CD4-positive, alpha-beta T cell (primary cell): ENCODE measurements at regions of chr13 and their contacts with region 1.

Region 1: DNA sequence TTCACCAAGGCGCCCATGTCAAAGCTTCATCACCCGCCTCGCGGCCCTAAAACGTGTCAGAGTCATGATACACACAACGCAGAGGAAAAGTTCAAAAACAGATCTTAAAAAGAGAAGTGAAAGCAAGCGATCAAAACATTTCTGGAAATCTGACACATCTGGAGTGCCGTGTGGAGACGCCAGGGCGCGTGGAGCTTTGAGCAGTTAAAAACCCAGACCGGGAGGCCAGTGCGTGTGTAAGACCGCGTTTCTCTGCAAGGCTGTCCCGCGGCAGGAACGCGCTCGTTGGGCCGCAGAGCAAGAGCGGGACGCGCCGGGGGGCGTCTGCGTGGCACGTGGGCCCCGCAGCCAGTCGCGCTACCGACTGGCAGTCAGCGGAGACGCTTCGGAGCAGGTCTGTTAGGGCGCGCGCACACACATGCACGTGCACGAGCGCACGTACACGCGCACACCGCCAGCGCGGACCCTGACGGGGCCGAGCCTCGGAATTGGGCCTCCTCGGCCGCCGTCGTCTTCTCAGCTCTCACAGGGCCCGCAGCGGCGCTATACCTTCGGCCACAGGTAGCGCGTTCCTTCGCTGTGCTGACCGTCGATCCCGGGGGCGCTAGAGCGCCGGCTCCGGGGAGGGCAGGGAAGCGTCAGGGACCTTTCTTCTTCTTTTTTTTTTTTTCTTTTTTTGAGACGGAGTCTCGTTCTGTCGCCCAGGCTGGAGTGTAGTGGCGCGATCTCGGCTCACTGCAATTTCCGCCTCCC is 35.8 kb downstream of the RNF6 start:
- DNase-seq: peak; percentile 83 to 97 (median 88)
- ATAC-seq: peak; percentile 83
- H3K4me3 ChIP-seq: peak overlapping the region; percentile 88
- H3K4me3 Mint-ChIP-seq: peak overlapping the region; percentile 87
- H3K27ac ChIP-seq: peak overlapping the region; percentile 55 to 60
- H3K27ac Mint-ChIP-seq: peak overlapping the region; percentile 92
- H3K4me1 ChIP-seq: peaks cover 26% of the 10 kb centered on the region
- H3K4me1 Mint-ChIP-seq: peaks cover 23% of the 10 kb centered on the region
- H3K27me3 ChIP-seq: no peaks in the 10 kb centered on the region
- H3K27me3 Mint-ChIP-seq: no peaks in the 10 kb centered on the region
- CTCF ChIP-seq: peak; percentile 40

Region 2: DNA sequence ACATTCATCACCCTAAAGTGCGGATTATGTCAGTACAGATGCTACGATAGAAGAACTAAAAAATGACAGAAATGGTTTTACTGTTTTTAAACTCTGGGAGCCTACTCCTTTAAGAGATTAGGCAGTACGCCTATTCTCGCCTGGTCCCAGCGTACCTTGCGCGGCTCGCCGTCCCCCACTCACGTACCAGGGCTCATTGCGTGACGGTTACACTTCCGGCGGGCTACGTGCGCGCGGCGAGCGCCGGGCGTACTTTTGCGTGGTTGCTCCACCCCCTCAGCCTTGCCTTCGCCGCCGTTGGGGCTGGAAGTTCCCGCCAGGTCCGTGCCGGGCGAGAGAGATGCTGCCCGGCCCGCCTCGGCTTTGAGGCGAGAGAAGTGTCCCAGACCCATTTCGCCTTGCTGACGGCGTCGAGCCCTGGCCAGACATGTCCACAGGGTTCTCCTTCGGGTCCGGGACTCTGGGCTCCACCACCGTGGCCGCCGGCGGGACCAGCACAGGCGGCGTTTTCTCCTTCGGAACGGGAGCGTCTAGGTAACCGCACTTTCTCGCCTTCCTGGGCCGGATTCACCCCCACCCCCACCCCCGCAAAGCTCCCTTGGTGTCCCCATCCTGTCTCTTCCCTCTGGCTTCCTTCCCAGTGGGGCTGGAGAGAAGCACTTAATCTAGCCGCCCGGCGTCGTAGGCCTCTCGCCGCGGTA is 884.8 kb before region 1 on chr13 and contains the start of gene NUP58:
- CTCF ChIA-PET with region 1: no interaction called
- POLR2A ChIA-PET with region 1: no interaction called
- intact Hi-C with region 1: loop called in 1 of 2 experiments (anchors 5 kb)
- DNase-seq: peak; percentile 87 to 98 (median 90)
- ATAC-seq: peak; percentile 97
- H3K4me3 ChIP-seq: peak within 1 kb of the TSS; percentile 80
- H3K4me3 Mint-ChIP-seq: peak within 1 kb of the TSS; percentile 99
- H3K27ac ChIP-seq: peak within 1 kb of the TSS; percentile 92 to 94
- H3K27ac Mint-ChIP-seq: peak within 1 kb of the TSS; percentile 95
- H3K4me1 ChIP-seq: peaks cover 26% of the 10 kb centered on the region
- H3K4me1 Mint-ChIP-seq: peaks cover 49% of the 10 kb centered on the region
- H3K27me3 ChIP-seq: peaks cover 0 to 4% of the 10 kb centered on the region in 2 experiments
- H3K27me3 Mint-ChIP-seq: peaks cover 14% of the 10 kb centered on the region
- CTCF ChIP-seq: no peak
- total RNA-seq, gene NUP58: 56.5 to 60.9 TPM

Region 3: GRCh38 chr13:26132756-26133155 is 53.5 kb before region 1 on chr13:
- CTCF ChIA-PET with region 1: no interaction called
- POLR2A ChIA-PET with region 1: no interaction called
- intact Hi-C with region 1: no loop called
- DNase-seq: peak in 1 of 14 experiments; percentile 2
- ATAC-seq: no peak
- H3K4me3 ChIP-seq: no peak overlapping the region
- H3K4me3 Mint-ChIP-seq: no peak overlapping the region
- H3K27ac ChIP-seq: no peak overlapping the region
- H3K27ac Mint-ChIP-seq: no peak overlapping the region
- H3K4me1 ChIP-seq: no peaks in the 10 kb centered on the region
- H3K4me1 Mint-ChIP-seq: no peaks in the 10 kb centered on the region
- H3K27me3 ChIP-seq: peaks cover 0 to under 1% of the 10 kb centered on the region in 2 experiments
- H3K27me3 Mint-ChIP-seq: peaks cover 6% of the 10 kb centered on the region
- CTCF ChIP-seq: no peak

Region 4: DNA sequence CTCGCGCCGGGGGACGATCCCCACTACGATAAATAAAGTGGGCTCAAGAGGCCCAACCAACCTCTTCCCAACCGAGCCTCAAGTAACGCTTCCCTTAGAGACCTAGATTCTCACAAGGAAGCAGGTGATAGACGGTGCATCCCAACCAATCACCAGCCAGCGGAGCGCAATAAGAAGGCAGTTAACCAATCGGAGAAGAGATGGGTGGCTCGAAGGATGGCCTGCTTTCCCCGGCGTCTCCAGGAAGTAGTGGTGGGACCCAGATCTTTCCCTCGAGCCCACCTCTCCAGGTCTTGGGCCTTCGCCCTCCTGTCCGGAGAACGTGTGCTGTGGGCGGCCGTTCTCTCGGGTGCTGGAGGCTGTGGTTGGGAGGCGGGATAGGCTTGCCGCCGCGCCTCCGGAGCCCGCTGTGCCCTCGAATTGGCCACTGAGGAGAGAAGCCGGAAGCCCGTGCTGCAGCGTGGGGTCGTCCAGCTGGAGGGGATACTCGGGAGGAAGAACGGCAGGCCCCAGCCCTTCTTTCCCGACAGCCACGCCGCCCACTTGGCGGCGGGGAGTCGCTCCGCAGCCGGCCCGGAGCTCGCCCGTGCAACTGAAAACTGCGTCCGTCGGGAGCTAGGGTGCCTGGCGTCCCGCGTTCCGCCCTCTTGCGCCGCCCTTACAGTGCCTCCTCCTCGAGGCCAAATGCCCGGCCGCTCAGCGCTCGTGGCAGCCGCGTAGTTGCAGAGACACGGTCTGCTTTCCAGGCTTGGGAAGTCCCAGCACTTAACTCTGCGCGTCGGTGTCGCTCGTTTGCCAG is 35.6 kb after region 1 on chr13 and contains the start of gene RNF6:
- CTCF ChIA-PET with region 1: interaction called, 51 read pairs
- POLR2A ChIA-PET with region 1: interaction called, 52 read pairs
- intact Hi-C with region 1: loop called (anchors 1 kb)
- DNase-seq: peak; percentile 75 to 96 (median 84)
- ATAC-seq: peak; percentile 94
- H3K4me3 ChIP-seq: peak within 1 kb of the TSS; percentile 84
- H3K4me3 Mint-ChIP-seq: peak within 1 kb of the TSS; percentile 99
- H3K27ac ChIP-seq: peak within 1 kb of the TSS; percentile 96
- H3K27ac Mint-ChIP-seq: peak within 1 kb of the TSS; percentile 89
- H3K4me1 ChIP-seq: peaks cover 17% of the 10 kb centered on the region
- H3K4me1 Mint-ChIP-seq: peaks cover 46% of the 10 kb centered on the region
- H3K27me3 ChIP-seq: no peaks in the 10 kb centered on the region
- H3K27me3 Mint-ChIP-seq: no peaks in the 10 kb centered on the region
- CTCF ChIP-seq: no peak
- total RNA-seq, gene RNF6: 46.5 to 49.5 TPM

Region 5: DNA sequence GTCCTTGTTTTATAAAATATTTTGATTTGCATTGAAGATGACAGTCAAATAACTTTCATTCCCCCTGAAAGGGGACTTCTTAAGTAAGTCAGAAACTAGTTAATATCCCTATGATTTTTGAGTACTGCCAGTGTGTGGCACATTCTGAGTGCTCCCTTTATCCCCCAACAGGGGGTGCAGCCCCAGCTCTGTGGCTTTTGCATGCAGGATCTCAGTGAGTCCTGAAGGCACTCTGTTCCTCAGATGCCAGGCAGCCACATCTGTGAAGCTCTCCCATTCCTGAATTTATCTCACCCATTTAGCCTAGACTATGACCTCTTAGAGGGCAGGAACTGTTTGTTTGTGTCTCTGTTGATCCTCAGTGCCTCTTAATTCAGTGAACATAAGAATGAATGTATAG is 190.7 kb after region 1 on chr13:
- CTCF ChIA-PET with region 1: interaction called, 4 read pairs
- POLR2A ChIA-PET with region 1: interaction called, 4 read pairs
- intact Hi-C with region 1: loop called in 1 of 2 experiments (anchors 10 kb)
- DNase-seq: peak in 3 of 14 experiments; percentile 2 to 8 (median 4)
- ATAC-seq: no peak
- H3K4me3 ChIP-seq: no peak overlapping the region
- H3K4me3 Mint-ChIP-seq: no peak overlapping the region
- H3K27ac ChIP-seq: no peak overlapping the region
- H3K27ac Mint-ChIP-seq: no peak overlapping the region
- H3K4me1 ChIP-seq: no peaks in the 10 kb centered on the region
- H3K4me1 Mint-ChIP-seq: peaks cover 26% of the 10 kb centered on the region
- H3K27me3 ChIP-seq: no peaks in the 10 kb centered on the region
- H3K27me3 Mint-ChIP-seq: no peaks in the 10 kb centered on the region
- CTCF ChIP-seq: peak; percentile 24

Region 6: DNA sequence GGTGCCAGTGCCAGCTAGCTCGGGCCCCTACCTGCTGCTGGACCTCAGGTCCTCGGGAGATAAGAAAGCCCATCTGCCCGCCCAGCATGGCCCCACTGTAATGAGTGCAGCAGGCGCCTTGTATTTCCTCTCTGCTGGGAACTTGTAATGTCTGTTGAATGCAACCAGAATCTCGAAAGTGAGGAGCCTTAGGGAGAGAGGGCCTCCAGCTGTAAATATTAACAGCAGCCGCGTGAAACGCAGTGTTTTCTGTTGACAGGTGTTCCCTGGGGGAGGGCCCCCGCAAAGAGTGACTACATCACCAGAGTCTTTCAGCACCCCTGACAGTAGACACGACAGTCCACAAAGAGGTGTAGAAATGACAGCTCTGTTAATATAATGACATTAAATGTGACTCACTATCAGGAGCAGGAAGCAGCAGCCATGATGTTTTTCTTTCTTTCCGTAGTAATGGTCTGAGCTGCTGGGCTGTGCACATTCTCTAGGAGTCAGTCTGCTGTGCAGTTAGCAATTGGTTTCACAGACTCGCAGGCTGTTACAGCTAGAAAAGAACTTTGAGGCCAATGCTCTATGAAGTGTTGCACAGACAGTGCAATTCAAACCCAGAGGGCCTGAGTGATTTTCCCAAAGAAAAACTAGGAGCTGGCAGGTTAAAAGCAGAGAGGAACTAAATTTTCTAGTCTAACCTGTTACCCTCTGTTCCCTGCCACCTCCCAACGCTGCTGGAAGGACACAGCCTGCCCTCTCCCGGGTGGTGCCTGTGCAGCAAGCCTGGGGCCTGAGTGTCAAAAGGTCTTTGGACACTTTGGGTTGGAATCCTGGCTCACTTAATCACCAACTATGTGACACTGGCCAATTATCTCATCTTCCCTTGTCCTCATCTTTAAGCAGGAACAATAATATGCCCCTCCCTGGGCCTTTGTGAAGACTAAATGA is 312.6 kb after region 1 on chr13:
- CTCF ChIA-PET with region 1: interaction called, 58 read pairs
- POLR2A ChIA-PET with region 1: interaction called, 19 read pairs
- intact Hi-C with region 1: loop called (anchors 1 kb)
- DNase-seq: no peak
- ATAC-seq: no peak
- H3K4me3 ChIP-seq: no peak overlapping the region
- H3K4me3 Mint-ChIP-seq: no peak overlapping the region
- H3K27ac ChIP-seq: no peak overlapping the region
- H3K27ac Mint-ChIP-seq: no peak overlapping the region
- H3K4me1 ChIP-seq: no peaks in the 10 kb centered on the region
- H3K4me1 Mint-ChIP-seq: peaks cover 9% of the 10 kb centered on the region
- H3K27me3 ChIP-seq: peaks cover 0 to 4% of the 10 kb centered on the region in 2 experiments
- H3K27me3 Mint-ChIP-seq: peaks cover 10% of the 10 kb centered on the region
- CTCF ChIP-seq: no peak

Region 7: DNA sequence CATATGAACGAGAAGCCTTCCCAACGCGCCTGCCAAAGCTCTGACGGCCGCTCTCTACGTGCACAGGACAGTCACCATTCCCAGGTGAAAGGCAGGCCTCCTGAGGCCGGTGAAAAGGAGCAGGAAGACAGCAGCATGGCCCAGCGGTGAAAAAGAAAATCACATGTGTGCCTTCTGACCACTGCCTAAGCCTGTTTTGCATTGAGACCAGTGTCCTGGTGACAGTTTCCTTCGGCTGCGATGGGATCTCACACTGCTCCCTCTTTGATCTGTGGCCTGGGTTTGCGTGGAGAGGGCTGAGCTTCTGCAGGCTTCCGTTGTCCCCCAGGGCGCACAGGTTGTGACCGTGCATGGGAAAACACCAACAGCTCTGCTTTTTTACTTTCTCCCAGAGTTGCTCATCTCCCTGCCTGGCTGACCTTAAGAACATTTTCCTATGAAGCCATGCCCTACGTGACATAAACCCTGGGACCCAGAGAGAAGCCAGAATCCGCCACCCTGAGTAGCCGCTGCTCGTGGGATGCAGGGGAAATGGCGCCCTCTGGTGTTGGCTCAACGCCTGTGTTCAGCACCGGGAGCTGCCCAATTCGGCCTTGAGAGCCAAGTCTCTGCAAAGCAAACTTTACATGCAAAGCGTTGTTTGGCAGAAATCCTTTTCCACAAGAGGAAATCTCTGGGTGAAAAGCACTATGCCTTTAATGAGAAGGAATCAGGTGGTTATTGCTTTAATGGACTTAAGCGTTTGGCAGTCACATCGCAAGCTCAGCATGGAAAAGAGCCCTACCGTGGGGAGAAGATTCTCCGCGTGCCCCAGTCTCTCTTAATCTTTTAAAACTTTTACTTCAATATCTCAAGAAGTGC is 686.5 kb after region 1 on chr13:
- CTCF ChIA-PET with region 1: no interaction called
- POLR2A ChIA-PET with region 1: no interaction called
- intact Hi-C with region 1: loop called in 1 of 2 experiments (anchors 10 kb)
- DNase-seq: peak in 13 of 14 experiments; percentile 11 to 65 (median 28)
- ATAC-seq: no peak
- H3K4me3 ChIP-seq: no peak overlapping the region
- H3K4me3 Mint-ChIP-seq: no peak overlapping the region
- H3K27ac ChIP-seq: no peak overlapping the region
- H3K27ac Mint-ChIP-seq: no peak overlapping the region
- H3K4me1 ChIP-seq: no peaks in the 10 kb centered on the region
- H3K4me1 Mint-ChIP-seq: no peaks in the 10 kb centered on the region
- H3K27me3 ChIP-seq: peaks cover 4 to 26% of the 10 kb centered on the region in 2 experiments
- H3K27me3 Mint-ChIP-seq: peaks cover 16% of the 10 kb centered on the region
- CTCF ChIP-seq: peak; percentile 49